ENCODE measurements at regions of chr14 and their contacts with region 1.

Region 1: DNA sequence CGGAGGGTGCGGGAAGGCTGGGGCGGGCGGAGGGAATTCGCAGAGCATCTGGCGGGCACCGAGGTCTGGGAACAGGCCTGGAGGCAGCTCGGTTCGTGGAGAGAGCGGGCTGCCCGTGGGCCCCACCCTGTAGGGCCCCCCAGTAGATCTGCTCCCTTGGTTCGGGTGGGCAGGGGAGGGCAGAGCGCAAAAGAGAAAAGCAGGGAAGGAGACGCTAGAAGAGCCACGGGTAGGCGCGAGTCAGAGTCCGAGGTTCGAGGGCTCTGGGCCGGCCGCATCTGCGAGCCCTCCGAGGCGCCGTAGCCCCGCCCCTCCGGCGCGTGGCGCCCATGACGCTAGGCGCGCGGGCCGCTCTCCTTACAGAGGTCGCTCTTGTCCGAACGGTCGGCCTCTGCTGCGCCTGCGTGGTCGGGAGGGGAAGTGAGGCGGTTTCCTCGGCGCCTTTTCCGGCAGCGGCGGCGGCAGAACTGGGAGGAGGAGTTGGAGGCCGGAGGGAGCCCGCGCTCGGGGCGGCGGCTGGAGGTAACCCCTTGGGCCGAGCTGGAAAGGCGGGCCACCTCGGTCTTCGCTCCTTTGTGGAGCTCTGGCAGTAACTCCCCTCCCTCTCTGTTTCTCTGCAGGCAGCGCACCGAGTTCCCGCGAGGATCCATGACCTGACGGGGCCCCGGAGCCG is at the start of gene ARF6:
- DNase-seq: peak; percentile 98
- ATAC-seq: peak; percentile 76
- H3K4me3 Mint-ChIP-seq: peak within 1 kb of the TSS; percentile 91
- H3K27ac Mint-ChIP-seq: peak within 1 kb of the TSS; percentile 98
- H3K4me1 Mint-ChIP-seq: peaks cover 16% of the 10 kb centered on the region
- H3K27me3 Mint-ChIP-seq: no peaks in the 10 kb centered on the region
- total RNA-seq, gene ARF6: 172 to 181 TPM

Region 2: GRCh38 chr14:49633640-49634546 is 258.9 kb before region 1 on chr14:
- CTCF ChIA-PET with region 1: no interaction called
- POLR2A ChIA-PET with region 1: no interaction called
- intact Hi-C with region 1: loop called in 1 of 2 experiments (anchors 1 kb)
- DNase-seq: peak; percentile 98
- ATAC-seq: peak; percentile 88
- H3K4me3 Mint-ChIP-seq: peak overlapping the region; percentile 98
- H3K27ac Mint-ChIP-seq: peak overlapping the region; percentile 95
- H3K4me1 Mint-ChIP-seq: peaks cover 46% of the 10 kb centered on the region
- H3K27me3 Mint-ChIP-seq: no peaks in the 10 kb centered on the region

Region 3: GRCh38 chr14:49659526-49660455 is 233.0 kb before region 1 on chr14:
- CTCF ChIA-PET with region 1: no interaction called
- POLR2A ChIA-PET with region 1: no interaction called
- intact Hi-C with region 1: no loop called
- DNase-seq: no peak
- ATAC-seq: no peak
- H3K4me3 Mint-ChIP-seq: no peak overlapping the region
- H3K27ac Mint-ChIP-seq: no peak overlapping the region
- H3K4me1 Mint-ChIP-seq: no peaks in the 10 kb centered on the region
- H3K27me3 Mint-ChIP-seq: no peaks in the 10 kb centered on the region

Region 4: GRCh38 chr14:49867831-49868723 is 24.7 kb before region 1 on chr14:
- CTCF ChIA-PET with region 1: interaction called, 22 read pairs
- POLR2A ChIA-PET with region 1: interaction called, 11 read pairs
- intact Hi-C with region 1: loop called (anchors 1 kb)
- DNase-seq: peak; percentile 100
- ATAC-seq: peak; percentile 87
- H3K4me3 Mint-ChIP-seq: peak overlapping the region; percentile 98
- H3K27ac Mint-ChIP-seq: peak overlapping the region; percentile 96
- H3K4me1 Mint-ChIP-seq: peaks cover 22% of the 10 kb centered on the region
- H3K27me3 Mint-ChIP-seq: no peaks in the 10 kb centered on the region

Region 5: GRCh38 chr14:49984424-49984823 is 91.7 kb after region 1 on chr14:
- CTCF ChIA-PET with region 1: interaction called, 3 read pairs
- POLR2A ChIA-PET with region 1: interaction called, 7 read pairs
- intact Hi-C with region 1: loop called in 1 of 2 experiments (anchors 1 kb)
- DNase-seq: peak; percentile 50
- ATAC-seq: peak; percentile 79
- H3K4me3 Mint-ChIP-seq: peak overlapping the region; percentile 16
- H3K27ac Mint-ChIP-seq: peak overlapping the region; percentile 85
- H3K4me1 Mint-ChIP-seq: peaks cover 70% of the 10 kb centered on the region
- H3K27me3 Mint-ChIP-seq: no peaks in the 10 kb centered on the region

Region 6: GRCh38 chr14:50060871-50061663 is 168.3 kb after region 1 on chr14:
- CTCF ChIA-PET with region 1: interaction called, 4 read pairs
- POLR2A ChIA-PET with region 1: interaction called, 3 read pairs
- intact Hi-C with region 1: loop called (anchors 1 to 2 kb)
- DNase-seq: peak; percentile 65
- ATAC-seq: peak; percentile 6
- H3K4me3 Mint-ChIP-seq: peak overlapping the region; percentile 90
- H3K27ac Mint-ChIP-seq: peak overlapping the region; percentile 100
- H3K4me1 Mint-ChIP-seq: peaks cover 84% of the 10 kb centered on the region
- H3K27me3 Mint-ChIP-seq: no peaks in the 10 kb centered on the region

Region 7: GRCh38 chr14:50116181-50116956 is 223.6 kb after region 1 on chr14 and contains the start of gene VCPKMT:
- CTCF ChIA-PET with region 1: no interaction called
- POLR2A ChIA-PET with region 1: no interaction called
- intact Hi-C with region 1: loop called in 1 of 2 experiments (anchors 1 kb)
- DNase-seq: peak; percentile 98
- ATAC-seq: peak; percentile 99
- H3K4me3 Mint-ChIP-seq: peak within 1 kb of the TSS; percentile 95
- H3K27ac Mint-ChIP-seq: peak within 1 kb of the TSS; percentile 97
- H3K4me1 Mint-ChIP-seq: peaks cover 25% of the 10 kb centered on the region
- H3K27me3 Mint-ChIP-seq: no peaks in the 10 kb centered on the region
- total RNA-seq, gene VCPKMT: 6.6 to 10.4 TPM

Region 8: GRCh38 chr14:50156111-50156510 is 263.3 kb after region 1 on chr14:
- CTCF ChIA-PET with region 1: no interaction called
- POLR2A ChIA-PET with region 1: no interaction called
- intact Hi-C with region 1: no loop called
- DNase-seq: no peak
- ATAC-seq: no peak
- H3K4me3 Mint-ChIP-seq: no peak overlapping the region
- H3K27ac Mint-ChIP-seq: no peak overlapping the region
- H3K4me1 Mint-ChIP-seq: no peaks in the 10 kb centered on the region
- H3K27me3 Mint-ChIP-seq: no peaks in the 10 kb centered on the region

Region 9: GRCh38 chr14:51846631-51847488 is 1954.1 kb after region 1 on chr14:
- CTCF ChIA-PET with region 1: no interaction called
- POLR2A ChIA-PET with region 1: no interaction called
- intact Hi-C with region 1: loop called in 1 of 2 experiments (anchors 5 kb)
- DNase-seq: peak; percentile 91
- ATAC-seq: peak; percentile 76
- H3K4me3 Mint-ChIP-seq: peak overlapping the region; percentile 80
- H3K27ac Mint-ChIP-seq: peak overlapping the region; percentile 99
- H3K4me1 Mint-ChIP-seq: peaks cover 78% of the 10 kb centered on the region
- H3K27me3 Mint-ChIP-seq: no peaks in the 10 kb centered on the region